HepG2 (cell line): ENCODE measurements at regions of chr13 and their contacts with region 1.

Region 1: GRCh38 chr13:31174018-31174417 is 12.3 kb upstream of the HSPH1 start:
- DNase-seq: peak; percentile 38
- ATAC-seq: peak; percentile 58
- H3K4me3 ChIP-seq: no peak overlapping the region
- H3K27ac ChIP-seq: no peak overlapping the region
- H3K4me1 ChIP-seq: peaks cover 64% of the 10 kb centered on the region
- H3K27me3 ChIP-seq: no peaks in the 10 kb centered on the region
- CTCF ChIP-seq: peak; percentile 43
- EP300 ChIP-seq: no peak
- POLR2A ChIP-seq: no peak
- RAD21 ChIP-seq: no peak

Region 2: DNA sequence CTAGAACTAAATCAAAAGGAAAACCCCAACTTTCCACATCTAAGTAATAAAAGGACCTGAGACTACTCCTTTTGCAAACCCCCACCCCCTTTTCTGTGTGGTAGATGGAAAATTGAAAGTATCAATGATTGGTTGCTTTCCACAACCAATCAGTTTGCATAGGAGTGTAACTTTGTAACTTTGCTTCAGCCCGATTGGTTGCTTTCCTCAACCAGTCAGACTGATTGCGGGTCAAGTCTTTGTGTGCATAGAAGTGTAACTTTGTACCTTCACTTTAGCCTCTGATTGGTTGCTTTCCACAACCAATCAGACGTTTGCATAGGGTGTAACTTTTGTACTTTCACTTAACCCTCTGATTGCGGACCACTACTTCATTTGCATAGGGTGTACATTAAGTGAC is 17.7 kb after region 1 on chr13:
- CTCF ChIA-PET with region 1: no interaction called
- POLR2A ChIA-PET with region 1: no interaction called
- in situ Hi-C with region 1: no loop called
- intact Hi-C with region 1: loop called (anchors 2 kb)
- DNase-seq: peak; percentile 61
- ATAC-seq: peak; percentile 91
- H3K4me3 ChIP-seq: no peak overlapping the region
- H3K27ac ChIP-seq: no peak overlapping the region
- H3K4me1 ChIP-seq: peaks cover 13% of the 10 kb centered on the region
- H3K27me3 ChIP-seq: no peaks in the 10 kb centered on the region; a peak in 1 of 5 replicates
- CTCF ChIP-seq: no peak
- EP300 ChIP-seq: no peak
- POLR2A ChIP-seq: no peak
- RAD21 ChIP-seq: no peak

Region 3: DNA sequence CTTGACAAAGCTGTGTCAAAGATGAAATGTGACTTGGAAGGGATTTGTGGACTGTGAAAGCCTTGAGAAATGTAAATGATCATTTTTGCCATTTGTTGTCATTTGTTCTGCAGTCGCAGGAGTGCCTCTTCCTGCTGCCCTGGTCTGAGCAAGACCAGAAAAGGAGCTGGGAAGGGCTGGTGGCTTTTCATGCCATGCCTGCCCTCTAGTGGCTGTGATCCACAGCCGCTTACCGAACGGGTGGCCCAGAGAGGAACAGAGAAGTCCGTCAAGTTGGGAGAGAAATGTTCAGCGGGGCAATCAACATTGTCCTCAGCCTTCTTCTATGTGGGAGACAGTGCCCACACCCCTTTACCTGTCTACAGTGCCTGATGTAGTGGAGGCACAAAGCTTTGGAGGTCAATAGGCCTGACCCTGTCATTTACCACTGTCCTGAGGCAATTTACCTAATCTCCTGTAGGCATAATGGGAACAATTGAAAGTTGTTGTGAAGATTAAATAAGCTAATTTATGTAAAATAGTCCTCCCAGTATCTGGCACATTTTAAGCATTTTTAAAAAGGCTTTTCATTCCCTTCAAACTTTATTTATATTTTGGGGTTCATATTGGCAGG is 250.2 kb after region 1 on chr13:
- CTCF ChIA-PET with region 1: interaction called, 3 read pairs
- POLR2A ChIA-PET with region 1: no interaction called
- in situ Hi-C with region 1: loop called (anchors 5 kb)
- intact Hi-C with region 1: loop called (anchors 1 kb)
- DNase-seq: peak; percentile 64
- ATAC-seq: peak; percentile 100
- H3K4me3 ChIP-seq: no peak overlapping the region
- H3K27ac ChIP-seq: no peak overlapping the region
- H3K4me1 ChIP-seq: no peaks in the 10 kb centered on the region
- H3K27me3 ChIP-seq: peaks cover 0 to 2% of the 10 kb centered on the region in 2 experiments; a peak in 1 of 5 replicates
- CTCF ChIP-seq: peak; percentile 92
- EP300 ChIP-seq: no peak
- POLR2A ChIP-seq: no peak
- RAD21 ChIP-seq: no peak; the same call in 1 of the 2 replicates